Activated T-helper 1 cell treated with anti-CD3 and anti-CD28 coated beads, Interleukin-12 subunit alpha, Interleukin-12 subunit beta, Interleukin-2, Interleukin-4 antibody, amounts not matched to agents 30 ng/mL and 10 ng/mL and 1 ng/mL, durations not matched to agents 14 hours and 24 hours and 36 hours (primary cell): ENCODE measurements at regions of chr2 and their contacts with region 1.

Region 1: DNA sequence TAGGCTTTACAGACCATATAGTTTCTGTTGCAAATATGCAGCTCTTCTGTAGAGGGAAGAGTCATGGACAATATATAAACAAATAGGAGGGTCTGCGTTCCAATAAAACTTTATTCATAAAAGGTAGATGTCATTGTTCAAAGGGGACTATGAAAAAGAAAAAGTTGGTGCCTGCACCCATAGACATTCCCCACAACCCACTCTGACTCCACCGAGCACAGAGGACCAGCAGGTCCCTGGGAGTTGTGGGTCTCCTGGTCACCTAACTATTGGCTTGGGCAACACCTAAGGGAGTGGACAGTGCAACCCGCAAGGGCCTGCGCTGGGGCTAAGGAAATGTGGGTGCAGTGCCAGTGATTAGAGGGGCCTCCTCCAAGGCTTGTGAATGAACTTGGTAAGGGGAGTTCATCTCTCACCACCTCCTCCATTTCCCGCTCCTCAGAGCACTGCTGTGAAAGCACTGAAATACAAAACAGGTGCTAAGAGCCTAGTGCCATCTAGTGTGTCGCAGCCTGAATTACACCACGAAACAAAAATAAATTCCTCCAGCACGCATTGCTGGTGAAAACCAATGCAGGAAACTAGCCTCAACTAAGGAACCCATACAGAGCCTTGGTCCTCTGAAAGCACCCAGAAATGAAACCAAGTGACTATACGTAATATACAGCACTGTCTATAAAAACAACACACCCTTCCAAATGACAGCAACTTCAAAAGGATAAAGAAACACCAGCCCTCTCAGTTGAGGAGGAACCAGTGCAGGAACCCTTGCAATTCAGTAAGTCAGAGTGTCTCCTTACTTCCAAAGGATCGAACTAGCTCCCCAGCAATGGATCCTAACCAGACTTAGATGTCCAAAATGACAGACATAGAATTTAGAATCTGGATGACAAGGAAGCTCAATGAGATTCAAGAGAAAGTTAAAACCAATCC is 166.6 kb downstream of the RNF144A start:
- DNase-seq: no peak
- H3K4me3 Mint-ChIP-seq: no peak overlapping the region
- H3K27ac Mint-ChIP-seq: no peak overlapping the region
- H3K4me1 Mint-ChIP-seq: no peaks in the 10 kb centered on the region
- H3K27me3 Mint-ChIP-seq: peaks cover 5% of the 10 kb centered on the region

Region 2: DNA sequence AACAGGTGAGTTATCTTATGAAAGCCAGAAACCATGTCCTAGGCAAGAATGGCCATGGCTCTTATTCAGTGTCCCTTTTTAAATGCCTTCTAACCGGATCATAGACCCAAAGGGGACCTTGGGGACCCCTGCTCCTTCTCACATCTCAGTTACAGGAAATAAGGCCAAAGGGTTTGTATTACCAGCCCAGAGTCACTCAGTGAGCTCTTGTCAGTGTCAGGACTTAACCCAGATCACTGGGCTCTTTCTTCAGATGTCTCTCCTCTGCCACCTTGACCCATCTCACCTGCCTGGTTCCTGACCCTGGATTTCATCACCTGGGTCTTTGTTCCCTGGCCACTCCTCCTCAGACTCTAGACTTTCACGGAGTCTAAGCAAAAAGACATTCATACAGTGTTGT is 774.9 kb before region 1 on chr2:
- intact Hi-C with region 1: no loop called
- DNase-seq: no peak
- H3K4me3 Mint-ChIP-seq: no peak overlapping the region
- H3K27ac Mint-ChIP-seq: no peak overlapping the region
- H3K4me1 Mint-ChIP-seq: no peaks in the 10 kb centered on the region
- H3K27me3 Mint-ChIP-seq: no peaks in the 10 kb centered on the region

Region 3: DNA sequence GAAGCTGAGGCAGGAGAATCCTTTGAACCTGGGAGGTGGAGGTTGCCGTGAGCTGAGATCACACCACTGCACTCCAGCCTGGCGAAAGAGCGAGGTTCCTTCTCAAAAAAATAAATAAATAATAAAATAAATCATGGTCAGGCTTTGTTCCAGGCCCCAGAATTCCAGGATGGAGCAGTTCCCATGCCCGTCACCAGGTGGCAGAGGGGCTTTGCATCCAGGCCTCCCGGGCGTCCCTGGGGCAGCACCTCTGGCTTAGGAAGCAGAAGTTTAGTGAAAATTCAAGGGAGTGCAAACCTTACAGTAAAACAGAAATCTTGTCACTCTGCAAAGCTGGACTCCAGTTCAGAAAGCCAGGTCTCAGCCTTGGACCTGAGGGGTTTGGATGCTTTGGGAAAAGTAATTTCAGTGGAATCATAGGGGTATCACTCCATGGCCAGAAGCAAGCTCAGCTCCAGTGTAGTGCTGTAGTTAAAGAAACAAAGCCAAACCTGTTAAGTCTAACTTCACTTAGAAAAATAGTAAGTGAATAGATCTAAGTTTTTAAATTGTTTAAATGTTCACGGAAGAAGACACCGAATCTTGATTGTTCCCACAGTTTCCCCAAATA is 730.8 kb before region 1 on chr2:
- intact Hi-C with region 1: no loop called
- DNase-seq: no peak
- H3K4me3 Mint-ChIP-seq: no peak overlapping the region
- H3K27ac Mint-ChIP-seq: no peak overlapping the region
- H3K4me1 Mint-ChIP-seq: no peaks in the 10 kb centered on the region
- H3K27me3 Mint-ChIP-seq: no peaks in the 10 kb centered on the region

Region 4: GRCh38 chr2:7037340-7038333 is 46.2 kb before region 1 on chr2:
- intact Hi-C with region 1: loop called (anchors 1 kb)
- DNase-seq: peak; percentile 14
- H3K4me3 Mint-ChIP-seq: no peak overlapping the region
- H3K27ac Mint-ChIP-seq: no peak overlapping the region
- H3K4me1 Mint-ChIP-seq: no peaks in the 10 kb centered on the region
- H3K27me3 Mint-ChIP-seq: no peaks in the 10 kb centered on the region

Region 5: DNA sequence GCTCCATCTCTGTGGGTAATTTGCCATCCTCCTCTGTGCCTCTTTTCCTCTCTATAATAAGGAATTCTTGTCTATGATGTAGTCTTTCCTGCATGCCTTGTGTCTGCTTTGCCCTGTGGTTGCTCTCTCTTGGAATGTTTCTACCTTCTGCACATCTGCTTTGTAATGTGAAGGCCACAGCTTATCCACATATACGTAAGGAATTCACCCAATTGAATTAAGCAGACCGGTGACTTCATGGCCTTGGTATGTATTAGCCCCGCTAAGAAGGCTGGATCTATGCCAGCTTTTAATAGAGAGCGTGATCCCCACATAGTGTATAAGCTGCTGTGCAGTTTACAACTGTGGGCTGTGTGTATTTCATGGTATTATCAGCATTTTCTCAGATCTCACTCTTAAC is 108.1 kb after region 1 on chr2:
- intact Hi-C with region 1: no loop called
- DNase-seq: no peak
- H3K4me3 Mint-ChIP-seq: no peak overlapping the region
- H3K27ac Mint-ChIP-seq: no peak overlapping the region
- H3K4me1 Mint-ChIP-seq: peaks cover 8% of the 10 kb centered on the region
- H3K27me3 Mint-ChIP-seq: no peaks in the 10 kb centered on the region